PC-9 (cell line): ENCODE measurements at regions of chr2 and their contacts with region 1.

Region 1: DNA sequence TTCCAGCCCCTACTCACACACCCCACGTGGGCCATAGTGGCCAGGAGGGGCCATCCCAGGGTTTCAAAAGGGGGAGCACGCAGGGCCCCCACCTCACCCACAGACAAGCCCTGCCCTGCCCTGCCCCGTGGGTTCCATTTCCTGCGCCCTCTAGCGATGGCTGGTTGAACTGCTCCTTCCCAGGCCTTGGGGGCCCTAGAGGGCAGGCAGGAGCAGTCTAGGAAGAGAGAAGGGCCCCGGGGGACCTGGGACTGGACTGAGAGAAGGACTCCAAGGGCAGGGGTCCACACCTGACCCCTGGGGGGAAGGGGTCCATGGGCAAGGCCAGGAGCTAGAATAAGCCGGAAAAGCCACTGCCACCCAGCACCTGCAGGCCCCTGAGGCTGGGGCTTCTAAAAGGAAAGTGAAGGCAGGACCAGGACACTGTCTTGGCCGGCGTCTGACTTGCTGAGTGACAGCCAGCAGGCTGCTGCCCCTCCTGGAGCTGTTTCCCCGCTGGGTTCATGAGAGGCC is 10.1 kb downstream of the CYP26B1 start:
- DNase-seq: peak in 1 of 2 experiments; percentile 69
- H3K4me3 ChIP-seq: peak overlapping the region; percentile 18; the same call in 1 of the 2 replicates
- H3K27ac ChIP-seq: peak overlapping the region; percentile 69
- H3K4me1 ChIP-seq: peaks cover 34% of the 10 kb centered on the region
- H3K27me3 ChIP-seq: no peaks in the 10 kb centered on the region
- CTCF ChIP-seq: peak; percentile 100

Region 2: DNA sequence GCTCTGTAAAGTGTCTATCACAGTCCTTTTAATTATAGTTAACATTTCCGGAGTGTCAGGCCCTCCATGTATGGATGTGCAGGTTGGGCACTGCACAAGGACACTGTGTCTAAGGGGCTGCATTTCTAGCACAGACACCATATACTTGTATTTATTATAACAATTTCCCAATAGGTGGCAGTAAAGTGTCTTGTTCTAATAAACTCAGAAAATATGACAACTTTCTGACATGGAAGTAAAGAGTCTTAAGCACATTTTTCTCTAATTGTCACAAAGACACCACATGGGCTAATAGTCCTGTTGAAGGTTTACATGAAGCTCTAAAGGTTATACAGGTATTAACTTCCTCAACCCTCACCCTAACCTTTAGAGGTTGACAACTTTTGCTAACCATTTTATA is 527.6 kb before region 1 on chr2:
- CTCF ChIA-PET with region 1: no interaction called
- POLR2A ChIA-PET with region 1: no interaction called
- intact Hi-C with region 1: loop called (anchors 5 kb)
- DNase-seq: peak in 1 of 2 experiments; percentile 52
- H3K4me3 ChIP-seq: no peak overlapping the region
- H3K27ac ChIP-seq: no peak overlapping the region
- H3K4me1 ChIP-seq: peaks cover 14% of the 10 kb centered on the region
- H3K27me3 ChIP-seq: no peaks in the 10 kb centered on the region
- CTCF ChIP-seq: peak; percentile 63

Region 3: GRCh38 chr2:71798266-71799012 is 339.1 kb before region 1 on chr2:
- CTCF ChIA-PET with region 1: interaction called, 4 read pairs
- POLR2A ChIA-PET with region 1: no interaction called
- intact Hi-C with region 1: loop called (anchors 5 kb)
- DNase-seq: no peak
- H3K4me3 ChIP-seq: no peak overlapping the region
- H3K27ac ChIP-seq: no peak overlapping the region
- H3K4me1 ChIP-seq: peaks cover 34% of the 10 kb centered on the region
- H3K27me3 ChIP-seq: no peaks in the 10 kb centered on the region
- CTCF ChIP-seq: peak; percentile 92

Region 4: DNA sequence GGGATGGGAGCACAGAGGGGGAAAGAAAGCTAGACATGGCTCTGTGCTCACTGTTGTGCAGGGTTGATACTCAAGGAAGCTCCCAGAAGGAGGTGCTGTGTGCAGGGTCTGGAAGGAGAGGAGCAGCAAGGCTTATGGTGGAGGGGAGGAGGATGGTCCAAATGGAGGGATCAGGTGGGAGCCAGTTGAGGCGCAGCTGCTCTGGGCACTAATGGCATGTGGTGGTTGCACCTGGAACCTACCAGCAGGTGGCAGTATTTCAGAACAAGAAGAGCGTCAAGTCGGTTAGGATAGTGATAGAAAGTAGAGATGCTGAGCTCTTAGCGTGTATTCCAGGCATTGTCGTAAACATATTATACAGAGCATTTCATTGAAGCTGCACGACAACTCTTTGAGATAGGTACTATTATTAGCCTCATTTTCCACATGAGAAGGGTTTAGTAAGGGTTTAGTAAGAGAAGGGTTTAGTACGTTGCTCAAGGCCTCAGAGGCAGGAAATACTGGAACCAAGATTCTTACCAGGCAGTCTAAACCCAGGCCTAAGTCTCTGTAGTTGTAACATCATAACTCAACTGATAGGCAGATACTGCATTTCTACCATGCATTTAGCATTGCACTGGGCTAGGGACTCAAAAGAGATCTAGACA is 213.5 kb before region 1 on chr2:
- CTCF ChIA-PET with region 1: no interaction called
- POLR2A ChIA-PET with region 1: no interaction called
- intact Hi-C with region 1: loop called (anchors 1 kb)
- DNase-seq: peak; percentile 42 to 48
- H3K4me3 ChIP-seq: no peak overlapping the region
- H3K27ac ChIP-seq: no peak overlapping the region
- H3K4me1 ChIP-seq: peaks cover 10% of the 10 kb centered on the region
- H3K27me3 ChIP-seq: no peaks in the 10 kb centered on the region
- CTCF ChIP-seq: peak; percentile 94

Region 5: GRCh38 chr2:72115552-72116546 is 21.7 kb before region 1 on chr2:
- CTCF ChIA-PET with region 1: interaction called, 5 read pairs
- POLR2A ChIA-PET with region 1: no interaction called
- intact Hi-C with region 1: loop called (anchors 1 kb)
- DNase-seq: peak; percentile 99
- H3K4me3 ChIP-seq: peak overlapping the region; percentile 4; the same call in 1 of the 2 replicates
- H3K27ac ChIP-seq: peak overlapping the region; percentile 80
- H3K4me1 ChIP-seq: peaks cover 34% of the 10 kb centered on the region
- H3K27me3 ChIP-seq: no peaks in the 10 kb centered on the region
- CTCF ChIP-seq: peak; percentile 84

Region 6: DNA sequence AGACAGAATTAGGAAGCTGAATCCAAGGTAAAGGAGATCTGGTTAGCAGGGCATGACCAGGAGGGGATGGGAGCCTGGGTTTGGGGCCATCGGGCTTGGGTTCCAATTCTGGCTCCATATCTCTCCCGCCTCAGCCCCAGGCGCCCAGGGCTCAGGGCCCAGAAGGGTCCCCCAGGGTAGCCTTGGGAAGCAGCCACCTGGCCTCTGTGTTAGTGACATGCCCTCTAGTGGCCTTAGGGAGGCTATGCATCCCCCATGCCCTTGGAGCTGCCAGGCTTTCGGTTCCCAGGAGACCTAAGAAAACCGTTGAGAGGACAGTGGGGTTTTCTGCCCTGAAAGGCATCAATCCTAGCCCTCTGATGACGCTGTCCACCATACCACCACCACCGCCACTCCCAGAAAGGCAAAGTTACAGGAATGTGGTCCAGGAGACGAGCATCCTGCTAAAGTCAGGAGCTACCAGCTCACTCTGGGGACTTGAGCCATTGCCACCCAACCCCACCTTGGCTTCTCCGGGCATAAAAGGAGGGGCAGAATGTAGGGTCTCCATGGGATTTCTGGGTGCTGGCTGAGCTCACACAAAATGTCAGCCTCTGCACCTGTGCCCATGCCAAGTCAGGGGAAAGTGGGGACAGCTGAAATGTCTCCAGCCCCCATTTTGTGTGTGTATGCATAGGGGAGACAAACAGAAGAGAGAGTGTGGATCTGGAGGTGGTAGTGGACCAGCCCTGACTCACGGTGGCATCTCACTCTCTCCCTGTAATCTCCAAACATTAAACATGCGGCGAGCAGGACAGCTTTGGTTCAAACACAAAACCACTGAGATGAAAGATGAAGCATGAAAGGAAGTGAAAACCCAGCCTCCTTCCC is 836.2 kb after region 1 on chr2:
- CTCF ChIA-PET with region 1: no interaction called
- POLR2A ChIA-PET with region 1: no interaction called
- intact Hi-C with region 1: no loop called
- DNase-seq: peak; percentile 41
- H3K4me3 ChIP-seq: no peak overlapping the region
- H3K27ac ChIP-seq: no peak overlapping the region
- H3K4me1 ChIP-seq: no peaks in the 10 kb centered on the region
- H3K27me3 ChIP-seq: no peaks in the 10 kb centered on the region
- CTCF ChIP-seq: peak; percentile 93